ENCODE measurements at regions of chr14 and their contacts with region 1.

Region 1: GRCh38 chr14:49892636-49893308 is at the start of gene ARF6:
- DNase-seq: peak; percentile 92 to 94 (median 92)
- H3K4me3 ChIP-seq: peak within 1 kb of the TSS; percentile 75 to 100
- H3K4me3 Mint-ChIP-seq: peak within 1 kb of the TSS; percentile 95 to 99 (median 98)
- H3K27ac ChIP-seq: peak within 1 kb of the TSS; percentile 98
- H3K27ac Mint-ChIP-seq: peak within 1 kb of the TSS; percentile 93 to 100 (median 99)
- H3K4me1 ChIP-seq: peaks cover 35% of the 10 kb centered on the region
- H3K4me1 Mint-ChIP-seq: peaks cover 13 to 45% (median 22%) of the 10 kb centered on the region in 4 donors
- H3K27me3 ChIP-seq: no peaks in the 10 kb centered on the region
- H3K27me3 Mint-ChIP-seq: no peaks in the 10 kb centered on the region
- total RNA-seq, gene ARF6: 116 to 124 TPM

Region 2: DNA sequence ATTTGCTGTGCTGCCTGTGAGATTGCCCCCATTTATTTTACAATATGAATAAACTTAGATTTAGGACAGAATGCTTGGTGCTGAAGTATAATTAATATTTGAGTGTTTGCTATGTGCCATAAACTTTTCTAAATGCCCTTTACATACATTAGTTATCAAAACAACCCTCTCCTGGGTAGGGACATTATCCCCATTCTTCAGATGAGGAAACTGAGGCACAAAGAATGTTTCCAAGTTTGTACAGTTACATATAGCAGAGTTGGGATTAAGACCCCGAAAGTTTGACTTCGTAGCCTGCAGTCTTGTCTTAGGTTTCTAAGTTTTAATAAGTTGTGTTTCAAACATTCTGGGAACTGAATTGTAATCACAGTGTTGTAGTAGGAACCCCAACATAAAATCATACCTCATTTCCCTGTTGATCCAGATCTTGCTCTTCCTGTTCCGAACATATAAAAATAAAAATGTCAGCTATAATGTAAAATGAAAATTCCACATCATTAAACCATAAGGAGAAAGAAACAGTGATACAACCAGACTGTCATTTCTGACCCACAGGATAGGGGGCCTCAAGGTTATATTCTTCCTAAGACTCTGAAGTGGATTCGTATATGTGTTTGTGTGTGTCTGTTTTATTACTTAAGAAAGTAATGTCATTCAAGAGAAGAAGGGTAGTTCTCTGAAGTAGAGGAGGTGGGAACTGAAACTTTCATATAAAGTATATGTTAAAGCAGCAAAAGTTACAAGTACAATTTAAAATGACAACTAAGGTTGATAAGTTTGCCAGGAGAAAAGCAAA is 106.3 kb before region 1 on chr14:
- CTCF ChIA-PET with region 1: no interaction called
- POLR2A ChIA-PET with region 1: no interaction called
- intact Hi-C with region 1: no loop called
- DNase-seq: no peak
- H3K4me3 ChIP-seq: no peak overlapping the region
- H3K4me3 Mint-ChIP-seq: no peak overlapping the region
- H3K27ac ChIP-seq: no peak overlapping the region
- H3K27ac Mint-ChIP-seq: peak overlapping the region in 3 of 7 donors; percentile 19 to 77 (median 27)
- H3K4me1 ChIP-seq: no peaks in the 10 kb centered on the region
- H3K4me1 Mint-ChIP-seq: peaks cover 0 to 4% (median under 1%) of the 10 kb centered on the region in 4 donors
- H3K27me3 ChIP-seq: no peaks in the 10 kb centered on the region
- H3K27me3 Mint-ChIP-seq: no peaks in the 10 kb centered on the region

Region 3: GRCh38 chr14:49879683-49880204 is 13.0 kb before region 1 on chr14:
- CTCF ChIA-PET with region 1: interaction called, 14 read pairs
- POLR2A ChIA-PET with region 1: interaction called, 40 read pairs
- intact Hi-C with region 1: loop called (anchors 2 kb)
- DNase-seq: peak; percentile 63 to 72 (median 65)
- H3K4me3 ChIP-seq: no peak overlapping the region
- H3K4me3 Mint-ChIP-seq: no peak overlapping the region
- H3K27ac ChIP-seq: no peak overlapping the region
- H3K27ac Mint-ChIP-seq: peak overlapping the region; percentile 67 to 89 (median 82)
- H3K4me1 ChIP-seq: peaks cover 15% of the 10 kb centered on the region
- H3K4me1 Mint-ChIP-seq: peaks cover 6 to 12% (median 8%) of the 10 kb centered on the region in 4 donors
- H3K27me3 ChIP-seq: no peaks in the 10 kb centered on the region
- H3K27me3 Mint-ChIP-seq: no peaks in the 10 kb centered on the region

Region 4: GRCh38 chr14:49930720-49931119 is 37.9 kb after region 1 on chr14:
- CTCF ChIA-PET with region 1: no interaction called
- POLR2A ChIA-PET with region 1: no interaction called
- intact Hi-C with region 1: no loop called
- DNase-seq: no peak
- H3K4me3 ChIP-seq: no peak overlapping the region
- H3K4me3 Mint-ChIP-seq: peak overlapping the region in 1 of 8 donors; percentile 33
- H3K27ac ChIP-seq: no peak overlapping the region
- H3K27ac Mint-ChIP-seq: peak overlapping the region in 1 of 7 donors; percentile 23
- H3K4me1 ChIP-seq: no peaks in the 10 kb centered on the region
- H3K4me1 Mint-ChIP-seq: peaks cover 0 to 3% (median under 1%) of the 10 kb centered on the region in 4 donors
- H3K27me3 ChIP-seq: no peaks in the 10 kb centered on the region
- H3K27me3 Mint-ChIP-seq: no peaks in the 10 kb centered on the region

Region 5: DNA sequence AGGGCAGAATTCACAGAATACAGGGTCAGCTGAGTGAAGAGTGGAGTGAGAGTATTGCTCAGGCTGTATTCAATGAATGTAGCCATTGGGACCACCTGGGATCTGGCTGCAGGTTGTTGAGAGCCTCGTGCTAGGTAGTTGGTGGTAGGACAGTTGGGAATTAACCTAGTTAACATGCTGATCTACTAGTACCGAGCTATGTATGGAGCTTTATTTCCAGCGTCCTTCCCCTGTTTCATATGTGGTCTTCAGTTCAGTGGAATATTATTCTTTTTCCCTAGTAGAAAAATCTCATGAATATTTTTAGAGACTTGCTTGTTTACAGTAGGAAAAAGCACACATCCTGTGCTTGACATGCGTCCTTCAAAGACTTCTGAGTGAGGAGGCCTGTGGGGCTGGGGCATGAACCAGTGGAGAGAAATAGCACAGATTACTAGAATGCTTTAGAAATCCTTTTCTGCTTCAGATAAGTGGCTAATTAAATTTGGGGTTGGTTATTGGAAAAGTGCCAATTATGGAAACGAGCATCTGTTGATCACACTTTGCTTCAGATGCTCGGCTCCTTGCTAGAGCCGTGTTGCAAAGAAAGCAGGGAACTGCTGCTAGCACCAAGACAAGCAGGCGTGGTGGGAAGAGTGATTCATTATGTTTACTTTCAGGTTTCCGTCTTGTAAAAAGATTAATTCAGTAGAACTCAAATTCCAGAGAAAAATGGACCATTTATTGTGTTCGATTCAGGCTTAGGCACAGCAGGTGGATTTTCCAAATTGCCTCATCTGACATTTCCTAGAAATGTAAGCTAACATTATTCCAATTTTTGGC is 53.8 kb after region 1 on chr14:
- CTCF ChIA-PET with region 1: interaction called, 3 read pairs
- POLR2A ChIA-PET with region 1: interaction called, 31 read pairs
- intact Hi-C with region 1: loop called (anchors 1 kb)
- DNase-seq: peak; percentile 40 to 67 (median 41)
- H3K4me3 ChIP-seq: peak overlapping the region in 1 of 2 donors; percentile 11
- H3K4me3 Mint-ChIP-seq: peak overlapping the region; percentile 1 to 78 (median 67)
- H3K27ac ChIP-seq: peak overlapping the region; percentile 64
- H3K27ac Mint-ChIP-seq: peak overlapping the region; percentile 90 to 97 (median 94)
- H3K4me1 ChIP-seq: peaks cover 69% of the 10 kb centered on the region
- H3K4me1 Mint-ChIP-seq: peaks cover 59 to 91% (median 72%) of the 10 kb centered on the region in 4 donors
- H3K27me3 ChIP-seq: no peaks in the 10 kb centered on the region
- H3K27me3 Mint-ChIP-seq: no peaks in the 10 kb centered on the region

Region 6: DNA sequence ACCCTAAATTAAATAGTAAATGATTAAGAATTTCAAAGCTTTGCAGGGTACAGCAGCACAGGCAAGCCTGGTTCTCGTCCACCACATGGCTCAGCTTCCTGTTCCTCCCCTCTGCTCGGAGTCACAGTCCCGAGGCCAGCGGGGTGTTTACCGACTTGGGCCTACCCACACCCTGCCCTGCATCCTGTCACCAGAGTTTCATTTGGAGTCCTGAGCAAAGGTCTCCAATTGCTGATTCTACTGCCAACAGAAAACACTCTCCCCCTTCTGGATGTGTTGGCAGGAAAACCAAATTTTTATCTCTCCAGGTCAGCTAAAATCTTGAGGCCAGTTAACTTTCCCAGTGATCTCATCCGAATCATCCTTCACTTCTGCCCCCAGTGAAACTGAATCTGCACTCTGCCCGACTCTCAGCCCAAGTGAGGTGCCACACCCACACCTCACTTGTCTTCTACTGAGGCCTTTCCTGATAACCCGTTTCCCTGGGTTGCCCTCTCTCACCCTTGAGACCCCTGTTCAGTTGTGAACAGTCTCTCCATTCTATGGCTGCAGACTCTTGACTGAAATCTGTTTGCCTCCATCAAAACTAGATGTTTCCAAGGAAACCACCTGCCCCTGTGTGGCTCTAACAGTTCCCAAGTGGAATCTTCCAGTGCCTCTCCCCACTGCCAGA is 152.4 kb after region 1 on chr14:
- CTCF ChIA-PET with region 1: no interaction called
- POLR2A ChIA-PET with region 1: interaction called, 29 read pairs
- intact Hi-C with region 1: loop called (anchors 1 kb)
- DNase-seq: peak; percentile 59 to 79 (median 71)
- H3K4me3 ChIP-seq: peak overlapping the region in 1 of 2 donors; percentile 12
- H3K4me3 Mint-ChIP-seq: peak overlapping the region; percentile 28 to 89 (median 66)
- H3K27ac ChIP-seq: peak overlapping the region; percentile 64
- H3K27ac Mint-ChIP-seq: peak overlapping the region; percentile 89 to 97 (median 94)
- H3K4me1 ChIP-seq: peaks cover 75% of the 10 kb centered on the region
- H3K4me1 Mint-ChIP-seq: peaks cover 56 to 85% (median 71%) of the 10 kb centered on the region in 4 donors
- H3K27me3 ChIP-seq: no peaks in the 10 kb centered on the region
- H3K27me3 Mint-ChIP-seq: no peaks in the 10 kb centered on the region

Region 7: DNA sequence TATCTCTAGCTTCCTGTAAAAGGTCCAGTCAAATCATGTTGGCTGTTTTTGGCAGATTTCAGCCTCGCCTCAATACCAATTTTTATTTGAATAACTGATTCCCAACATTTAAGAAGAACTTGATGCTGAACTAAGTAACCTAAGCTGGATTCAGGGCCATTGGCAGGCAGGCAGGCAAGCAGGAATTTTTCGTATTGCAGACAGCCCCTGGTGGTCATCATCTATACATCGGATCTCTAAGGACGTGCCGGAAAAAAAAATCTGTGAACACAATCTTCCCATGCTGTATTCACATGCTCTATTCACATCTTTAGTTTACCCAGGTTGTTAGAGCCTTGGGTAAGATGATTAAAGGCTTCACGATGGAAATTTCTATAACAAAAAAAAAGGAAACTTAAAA is 216.6 kb after region 1 on chr14:
- CTCF ChIA-PET with region 1: interaction called, 5 read pairs
- POLR2A ChIA-PET with region 1: interaction called, 5 read pairs
- intact Hi-C with region 1: loop called (anchors 1 kb)
- DNase-seq: no peak
- H3K4me3 ChIP-seq: no peak overlapping the region
- H3K4me3 Mint-ChIP-seq: no peak overlapping the region
- H3K27ac ChIP-seq: no peak overlapping the region
- H3K27ac Mint-ChIP-seq: peak overlapping the region in 5 of 7 donors; percentile 19 to 56 (median 37)
- H3K4me1 ChIP-seq: peaks cover 15% of the 10 kb centered on the region
- H3K4me1 Mint-ChIP-seq: peaks cover 6 to 25% (median 14%) of the 10 kb centered on the region in 4 donors
- H3K27me3 ChIP-seq: no peaks in the 10 kb centered on the region
- H3K27me3 Mint-ChIP-seq: no peaks in the 10 kb centered on the region

Measured in CD4-positive, alpha-beta memory T cell (primary cell).